Left cardiac atrium (tissue), 4 donors: ENCODE measurements at regions of chr17 and their contacts with region 1.

Region 1: DNA sequence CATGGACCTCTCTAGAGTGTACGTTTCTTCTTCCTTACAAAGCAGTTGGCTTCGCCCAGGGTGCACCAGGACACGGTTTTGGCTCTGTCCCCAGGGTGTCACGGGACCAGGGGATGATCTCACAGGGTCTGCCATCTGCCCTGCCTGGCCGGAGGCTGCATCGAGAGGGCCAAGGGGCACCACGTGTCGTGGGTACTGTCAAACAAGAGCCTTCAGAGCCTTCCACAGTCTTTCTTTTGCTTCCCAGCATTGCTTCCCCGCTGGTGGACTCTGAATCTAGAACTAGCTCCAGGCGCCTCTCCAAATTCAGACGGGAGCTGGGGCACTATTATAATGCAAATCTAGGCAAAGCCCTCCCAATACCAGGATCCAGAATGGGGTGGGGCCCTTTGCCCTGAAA is 47.9 kb downstream of the MAPT start:
- DNase-seq: peak; percentile 79
- ATAC-seq: peak; percentile 96 to 98

Region 2: DNA sequence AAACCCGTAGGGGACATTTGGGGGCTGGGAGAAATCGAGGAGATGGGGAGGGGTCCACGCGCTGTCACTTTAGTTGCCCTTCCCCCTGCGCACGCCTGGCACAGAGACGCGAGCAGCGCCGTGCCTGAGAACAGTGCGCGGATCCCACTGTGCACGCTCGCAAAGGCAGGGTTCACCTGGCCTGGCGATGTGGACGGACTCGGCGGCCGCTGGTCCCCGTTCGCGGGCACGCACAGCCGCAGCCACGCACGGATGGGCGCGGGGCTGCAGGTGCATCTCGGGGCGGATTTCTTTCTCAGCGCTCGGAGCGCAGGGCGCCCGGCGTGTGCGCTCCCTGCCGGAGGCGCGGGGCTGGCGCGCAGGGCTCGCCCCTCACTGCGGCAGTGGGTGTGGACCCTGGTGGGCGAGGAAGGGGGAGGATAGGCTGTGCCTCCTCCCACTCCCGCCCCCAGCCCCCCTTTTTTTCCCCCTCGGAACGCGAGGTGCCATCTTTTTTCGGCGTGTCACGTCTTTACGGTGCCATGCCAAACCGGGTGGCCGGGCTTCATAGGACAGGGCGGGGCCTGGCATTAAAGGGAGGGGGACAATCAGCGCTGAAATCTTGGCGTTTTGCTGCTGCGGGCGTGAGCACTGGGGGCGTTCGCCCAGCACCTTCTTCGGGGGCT is 46.8 kb before region 1 on chr17:
- intact Hi-C with region 1: loop called in 1 of 2 experiments (anchors 5 kb)
- DNase-seq: no peak
- ATAC-seq: peak; percentile 5 to 14

Region 3: GRCh38 chr17:46061435-46061834 is 119.2 kb after region 1 on chr17:
- intact Hi-C with region 1: no loop called
- DNase-seq: no peak
- ATAC-seq: no peak